Activated naive CD4-positive, alpha-beta T cell treated with anti-CD3 and anti-CD28 coated beads for 36 hours (primary cell): ENCODE measurements at regions of chr6 and their contacts with region 1.

Region 1: GRCh38 chr6:30326526-30327260 is at the start of gene TRIM39:
- DNase-seq: peak; percentile 87
- H3K4me3 Mint-ChIP-seq: peak within 1 kb of the TSS; percentile 96
- H3K27ac Mint-ChIP-seq: peak within 1 kb of the TSS; percentile 97
- H3K4me1 Mint-ChIP-seq: peaks cover 49% of the 10 kb centered on the region
- H3K27me3 Mint-ChIP-seq: no peaks in the 10 kb centered on the region
- total RNA-seq, gene TRIM39: 14.2 to 14.5 TPM

Region 2: DNA sequence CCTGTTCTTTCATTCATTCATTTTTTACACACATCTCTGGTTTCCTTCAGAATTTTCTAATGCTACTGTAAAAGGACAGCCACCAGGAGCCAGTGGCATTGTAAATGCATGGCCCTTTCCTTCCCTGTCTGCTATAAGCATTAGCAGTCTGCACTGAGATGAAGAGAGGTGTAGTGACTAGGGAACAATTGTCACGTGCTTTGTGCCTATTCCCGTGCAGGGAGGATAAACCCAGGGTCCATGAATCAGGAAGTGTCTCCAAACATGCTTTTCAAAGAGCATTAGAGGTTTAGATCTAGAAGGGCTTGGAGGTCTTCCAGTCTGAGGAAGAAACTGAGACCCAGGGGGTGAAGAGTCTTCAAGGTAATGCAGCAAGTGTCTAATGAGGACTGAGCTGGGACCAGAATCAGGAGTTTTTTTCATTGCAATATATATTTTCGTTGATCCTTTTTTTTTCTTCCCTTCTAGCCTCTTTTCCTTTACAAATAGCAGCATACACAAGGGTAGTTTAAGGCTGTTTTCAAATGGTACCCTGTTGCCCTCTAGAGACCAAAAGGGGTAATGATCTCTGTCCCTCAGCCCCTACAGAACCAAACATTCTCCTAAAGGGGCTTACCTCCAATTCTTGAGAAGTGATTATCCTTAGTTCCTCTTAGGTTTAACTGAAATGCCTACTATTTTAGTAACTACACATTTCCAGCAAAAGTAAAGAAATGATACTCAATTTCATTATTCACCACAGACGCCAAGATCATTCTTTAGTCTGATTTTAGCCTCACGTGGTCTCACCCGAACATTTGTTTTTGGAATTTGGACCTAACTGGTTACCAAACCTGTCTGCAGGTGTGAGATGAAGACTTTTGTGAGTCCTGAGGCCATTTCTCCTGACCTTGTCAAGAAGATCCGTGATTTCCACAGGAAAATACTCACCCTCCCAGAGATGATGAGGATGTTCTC is 156.8 kb before region 1 on chr6:
- CTCF ChIA-PET with region 1: no interaction called
- intact Hi-C with region 1: no loop called
- DNase-seq: peak; percentile 26
- H3K4me3 Mint-ChIP-seq: no peak overlapping the region
- H3K27ac Mint-ChIP-seq: no peak overlapping the region
- H3K4me1 Mint-ChIP-seq: peaks cover 21% of the 10 kb centered on the region
- H3K27me3 Mint-ChIP-seq: peaks cover 43% of the 10 kb centered on the region

Region 3: DNA sequence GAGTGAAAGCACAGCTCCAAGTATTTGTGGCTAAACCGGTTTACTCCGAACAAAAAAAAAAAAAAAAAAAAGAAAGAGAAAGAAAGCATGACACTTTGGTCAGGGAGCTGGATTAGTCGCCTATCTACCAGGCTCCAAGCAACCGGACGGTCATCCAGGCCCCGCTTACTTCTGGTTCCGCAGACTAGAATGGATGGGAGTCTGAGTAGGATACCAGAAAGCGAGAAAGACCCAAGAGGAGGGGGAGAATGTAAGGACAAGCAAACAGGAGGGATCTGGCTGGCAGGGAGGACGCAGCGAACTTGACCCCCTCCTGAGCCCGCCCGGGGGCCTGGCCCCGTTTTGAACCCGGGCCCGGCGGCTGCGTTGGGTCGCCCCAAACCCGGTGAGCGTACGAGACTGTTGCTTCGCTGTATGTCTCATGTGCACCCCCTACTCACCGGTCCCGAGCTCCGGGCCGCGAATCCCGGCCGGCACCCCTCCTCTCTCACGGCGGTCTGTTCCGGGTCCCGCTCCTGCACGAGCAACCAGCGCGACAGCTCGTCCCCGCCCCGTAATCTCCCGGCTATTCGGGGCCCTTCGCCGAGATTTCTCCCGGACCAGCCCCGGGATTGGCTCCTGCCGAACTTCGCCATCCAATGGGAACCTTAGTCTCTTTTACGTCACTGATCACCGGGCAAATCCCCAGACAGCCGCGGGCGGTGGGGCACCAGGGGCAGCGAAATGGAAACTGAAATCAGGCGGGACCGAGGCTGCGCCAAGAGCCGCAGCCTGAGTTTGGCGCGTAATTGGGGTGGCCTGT is 113.6 kb before region 1 on chr6 and contains the start of gene TRIM26:
- CTCF ChIA-PET with region 1: interaction called, 4 read pairs
- intact Hi-C with region 1: loop called (anchors 2 kb)
- DNase-seq: peak; percentile 99
- H3K4me3 Mint-ChIP-seq: peak within 1 kb of the TSS; percentile 94
- H3K27ac Mint-ChIP-seq: peak within 1 kb of the TSS; percentile 99
- H3K4me1 Mint-ChIP-seq: peaks cover 41% of the 10 kb centered on the region
- H3K27me3 Mint-ChIP-seq: no peaks in the 10 kb centered on the region
- total RNA-seq, gene TRIM26: 36.8 to 38.7 TPM

Region 4: DNA sequence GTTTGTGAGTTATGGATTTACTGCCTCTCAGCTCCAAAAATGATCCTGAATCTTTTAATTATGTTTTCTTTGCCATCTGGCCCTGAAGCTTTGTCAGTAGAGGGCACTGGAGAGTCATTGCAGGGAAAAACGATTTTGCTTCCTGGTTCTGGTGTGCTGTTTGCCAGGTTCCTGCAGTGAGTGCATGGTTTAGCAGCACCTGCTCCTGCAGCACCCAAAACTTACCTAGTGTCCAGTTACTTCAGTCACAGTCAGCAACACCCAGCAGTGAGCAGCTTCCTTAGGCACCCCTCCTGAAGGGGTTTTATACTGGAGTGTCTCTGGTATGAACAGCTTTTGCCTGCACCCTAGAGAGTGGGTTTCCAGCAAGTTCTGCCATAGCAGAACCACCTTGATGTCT is 107.4 kb before region 1 on chr6:
- CTCF ChIA-PET with region 1: interaction called, 10 read pairs
- intact Hi-C with region 1: no loop called
- DNase-seq: peak; percentile 73
- H3K4me3 Mint-ChIP-seq: no peak overlapping the region
- H3K27ac Mint-ChIP-seq: no peak overlapping the region
- H3K4me1 Mint-ChIP-seq: peaks cover 4% of the 10 kb centered on the region
- H3K27me3 Mint-ChIP-seq: no peaks in the 10 kb centered on the region

Region 5: GRCh38 chr6:30259140-30260035 is 67.3 kb before region 1 on chr6:
- CTCF ChIA-PET with region 1: interaction called, 3 read pairs
- intact Hi-C with region 1: loop called (anchors 1 kb)
- DNase-seq: peak; percentile 86
- H3K4me3 Mint-ChIP-seq: peak overlapping the region; percentile 85
- H3K27ac Mint-ChIP-seq: peak overlapping the region; percentile 77
- H3K4me1 Mint-ChIP-seq: peaks cover 11% of the 10 kb centered on the region
- H3K27me3 Mint-ChIP-seq: no peaks in the 10 kb centered on the region

Region 6: DNA sequence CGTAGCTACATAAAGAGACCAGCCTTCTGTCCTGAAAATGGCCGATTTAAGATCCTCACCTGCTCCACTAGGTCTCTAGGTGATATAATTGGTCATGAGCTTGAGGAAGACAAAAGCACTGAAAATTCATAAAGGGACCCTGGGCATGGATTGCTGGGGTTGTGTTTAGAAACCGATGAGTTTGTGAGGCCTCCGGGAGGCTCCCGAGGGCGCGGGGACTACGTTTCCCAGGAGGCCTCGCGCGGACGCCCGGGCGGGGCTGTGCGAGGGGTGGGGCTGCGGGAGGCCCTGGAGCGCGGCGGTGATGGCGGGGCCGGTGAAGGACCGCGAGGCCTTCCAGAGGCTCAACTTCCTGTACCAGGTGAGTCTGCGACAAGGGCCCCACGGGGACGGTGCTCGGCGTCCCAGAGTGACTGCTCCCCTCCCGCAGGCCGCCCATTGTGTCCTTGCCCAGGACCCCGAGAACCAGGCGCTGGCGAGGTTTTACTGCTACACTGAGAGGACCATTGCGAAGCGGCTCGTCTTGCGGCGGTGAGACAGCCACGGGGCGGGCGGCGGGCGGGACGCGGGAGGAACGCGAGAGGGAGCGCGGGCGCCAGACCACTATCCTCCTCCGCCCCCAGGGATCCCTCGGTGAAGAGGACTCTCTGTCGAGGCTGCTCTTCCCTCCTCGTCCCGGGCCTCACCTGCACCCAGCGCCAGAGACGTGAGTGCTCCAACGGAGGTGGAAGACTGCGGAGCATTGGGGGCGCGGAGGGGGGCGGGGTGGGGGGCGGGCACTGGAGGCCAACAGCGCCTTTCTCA is 18.4 kb after region 1 on chr6 and contains the start of gene RPP21:
- CTCF ChIA-PET with region 1: no interaction called
- intact Hi-C with region 1: loop called (anchors 1 kb)
- DNase-seq: peak; percentile 94
- H3K4me3 Mint-ChIP-seq: peak within 1 kb of the TSS; percentile 87
- H3K27ac Mint-ChIP-seq: peak within 1 kb of the TSS; percentile 86
- H3K4me1 Mint-ChIP-seq: peaks cover 38% of the 10 kb centered on the region
- H3K27me3 Mint-ChIP-seq: no peaks in the 10 kb centered on the region
- total RNA-seq, gene RPP21: 44.8 to 45.0 TPM

Region 7: GRCh38 chr6:30686908-30687658 is 360.4 kb after region 1 on chr6:
- CTCF ChIA-PET with region 1: no interaction called
- intact Hi-C with region 1: loop called (anchors 5 kb)
- DNase-seq: peak; percentile 77
- H3K4me3 Mint-ChIP-seq: peak overlapping the region; percentile 96
- H3K27ac Mint-ChIP-seq: peak overlapping the region; percentile 100
- H3K4me1 Mint-ChIP-seq: peaks cover 36% of the 10 kb centered on the region
- H3K27me3 Mint-ChIP-seq: no peaks in the 10 kb centered on the region